ENCODE measurements at regions of chr4 and their contacts with region 1.

Region 1: DNA sequence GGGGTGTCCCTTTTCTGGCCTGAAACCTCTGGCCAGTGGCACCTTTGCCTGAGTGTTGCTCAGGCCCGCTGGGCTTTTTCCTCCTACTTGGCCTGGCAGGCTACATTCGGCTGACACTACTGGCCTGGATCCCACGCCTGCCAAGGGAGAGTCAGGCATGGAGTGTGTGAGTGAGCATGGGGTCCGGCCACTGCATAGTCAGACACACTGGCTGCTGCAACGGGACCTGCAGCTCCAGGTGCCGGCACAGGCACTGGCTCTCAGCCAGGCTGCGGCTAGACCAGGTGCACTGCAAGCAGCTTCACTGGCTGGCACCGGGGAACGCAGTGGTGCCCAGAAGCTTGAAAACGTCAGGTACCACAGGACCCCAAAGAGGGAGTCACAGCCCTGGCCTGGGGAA is 434.9 kb downstream of the ARHGAP24 start:
- DNase-seq: no peak
- H3K4me3 ChIP-seq: no peak overlapping the region
- CTCF ChIP-seq: no peak
- POLR2A ChIP-seq: no peak

Region 2: DNA sequence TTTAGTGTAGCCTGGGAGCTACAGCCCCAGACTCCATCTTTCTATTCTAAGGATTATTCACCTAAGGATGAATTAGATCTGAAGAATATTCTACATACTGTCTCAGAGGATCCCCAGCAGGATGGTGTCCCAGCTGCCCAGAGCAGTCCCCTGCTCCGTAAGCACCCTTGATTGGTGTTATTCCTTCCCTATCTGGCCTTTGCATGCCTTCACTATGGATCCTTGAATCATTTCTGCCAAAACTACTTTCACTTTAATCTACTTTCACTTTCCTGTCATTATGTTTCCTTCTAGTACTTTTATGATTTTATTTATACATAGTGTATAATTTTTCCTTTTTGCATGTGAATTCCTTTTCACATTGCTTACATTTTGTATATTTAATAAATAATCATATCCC is 395.7 kb before region 1 on chr4:
- intact Hi-C with region 1: no loop called
- DNase-seq: no peak
- H3K4me3 ChIP-seq: no peak overlapping the region
- CTCF ChIP-seq: no peak
- POLR2A ChIP-seq: no peak

Region 3: GRCh38 chr4:85870298-85871083 is 39.4 kb before region 1 on chr4:
- intact Hi-C with region 1: loop called (anchors 1 kb)
- DNase-seq: no peak
- H3K4me3 ChIP-seq: no peak overlapping the region
- CTCF ChIP-seq: no peak
- POLR2A ChIP-seq: no peak

Region 4: DNA sequence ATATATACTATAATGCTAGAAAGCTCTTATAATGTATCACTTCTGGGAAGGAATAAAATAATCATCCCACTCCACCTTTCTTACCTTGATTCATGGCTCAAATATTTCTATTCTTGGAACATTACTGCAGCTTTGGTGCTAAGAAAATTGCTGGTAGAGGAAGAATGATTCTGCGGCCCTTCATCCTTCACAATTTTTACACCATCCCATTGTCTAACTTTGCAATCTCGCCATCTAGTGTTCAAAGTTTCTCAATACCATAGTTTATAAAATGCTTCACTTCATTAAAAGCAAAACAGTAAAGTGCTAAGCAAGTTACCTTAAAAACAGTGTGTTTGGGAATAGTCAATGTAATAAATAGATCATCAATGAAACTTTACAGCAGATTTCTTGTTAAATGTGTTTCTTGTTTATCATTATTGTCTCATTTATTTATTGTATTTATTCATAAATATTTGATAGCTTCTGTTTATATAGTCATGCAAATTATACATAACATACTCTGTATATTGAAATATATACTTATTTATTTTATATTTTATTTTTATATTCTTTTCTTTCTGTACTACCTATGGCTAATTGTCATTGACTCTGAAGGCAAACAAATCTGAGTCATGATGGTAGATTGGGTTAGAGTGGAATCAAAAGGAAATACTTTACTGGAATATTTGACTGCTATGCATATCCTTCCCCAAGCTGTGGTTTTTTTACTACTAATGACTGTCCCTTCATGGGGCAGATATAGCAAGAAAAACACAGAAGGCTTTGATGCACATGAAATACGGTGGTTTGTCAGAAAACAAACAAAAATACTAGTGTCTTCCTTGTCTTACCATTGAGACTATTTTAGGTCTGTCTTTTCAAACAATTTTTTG is 59.3 kb after region 1 on chr4:
- intact Hi-C with region 1: no loop called
- DNase-seq: no peak
- H3K4me3 ChIP-seq: no peak overlapping the region
- CTCF ChIP-seq: no peak
- POLR2A ChIP-seq: no peak

Region 5: GRCh38 chr4:87707279-87707918 is 1797.5 kb after region 1 on chr4:
- intact Hi-C with region 1: no loop called
- DNase-seq: no peak
- H3K4me3 ChIP-seq: no peak overlapping the region
- CTCF ChIP-seq: no peak
- POLR2A ChIP-seq: no peak

Measured in lower leg skin (tissue), 4 donors.